ENCODE measurements at regions of chr3 and their contacts with region 1.

Region 1: DNA sequence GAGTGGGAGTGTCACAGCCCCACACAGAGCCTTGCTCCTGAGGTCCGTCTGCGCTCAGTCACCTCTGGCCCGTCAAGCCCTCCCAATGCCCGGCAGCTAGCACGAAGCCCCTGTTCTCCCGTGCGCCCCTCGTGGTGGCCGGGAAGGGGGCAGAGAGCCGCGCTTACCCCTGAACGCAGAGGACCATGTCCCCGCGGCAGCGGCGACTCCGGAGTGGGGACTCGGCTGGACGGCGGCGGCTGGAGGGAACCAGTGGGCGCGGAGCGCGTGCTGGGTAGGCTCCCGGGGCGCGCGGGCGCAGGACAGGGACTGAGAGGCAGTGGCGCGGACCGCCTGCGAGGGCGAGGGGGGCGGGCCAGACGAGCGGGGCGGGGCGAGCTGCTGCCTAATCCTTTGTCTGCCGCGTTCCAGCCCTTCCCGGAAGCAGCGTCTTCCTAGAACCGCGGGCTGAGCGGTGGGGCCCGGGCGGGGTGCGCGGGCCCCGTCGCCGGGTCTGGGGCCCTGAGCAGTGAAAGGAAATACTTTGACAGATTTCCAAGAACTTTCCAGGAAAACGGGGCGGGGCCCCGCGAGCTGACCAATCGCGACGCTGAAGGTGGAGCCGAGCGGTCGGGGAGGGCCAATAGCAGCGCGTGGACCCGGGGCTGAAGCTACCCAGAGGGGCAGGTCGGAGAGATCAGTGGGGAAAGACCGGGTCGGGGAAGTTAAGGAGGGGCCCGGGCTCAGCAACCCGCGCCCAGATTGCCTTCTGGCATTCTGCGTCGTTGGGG is at the start of gene CISH:
- DNase-seq: peak; percentile 90 to 93
- ATAC-seq: peak; percentile 75 to 86 (median 78)
- H3K4me3 ChIP-seq: peak within 1 kb of the TSS; percentile 78
- H3K4me3 Mint-ChIP-seq: peak within 1 kb of the TSS; percentile 97
- H3K27ac ChIP-seq: peak within 1 kb of the TSS; percentile 62
- H3K27ac Mint-ChIP-seq: peak within 1 kb of the TSS; percentile 90 to 93
- H3K4me1 ChIP-seq: peaks cover 88% of the 10 kb centered on the region
- H3K4me1 Mint-ChIP-seq: peaks cover 77 to 86% of the 10 kb centered on the region in 2 donors
- H3K27me3 ChIP-seq: no peaks in the 10 kb centered on the region
- H3K27me3 Mint-ChIP-seq: no peaks in the 10 kb centered on the region
- CTCF ChIP-seq: peak; percentile 52
- total RNA-seq, gene CISH: 2.4 to 23.6 (median 11.3) TPM

Region 2: GRCh38 chr3:50350527-50351322 is 260.9 kb before region 1 on chr3 and contains the starts of genes CYB561D2 and NPRL2:
- intact Hi-C with region 1: loop called (anchors 1 kb)
- DNase-seq: peak; percentile 97 to 99
- ATAC-seq: peak; percentile 87 to 95 (median 88)
- H3K4me3 ChIP-seq: peak within 1 kb of the TSS; percentile 86
- H3K4me3 Mint-ChIP-seq: peak within 1 kb of the TSS; percentile 96
- H3K27ac ChIP-seq: peak within 1 kb of the TSS; percentile 90
- H3K27ac Mint-ChIP-seq: peak within 1 kb of the TSS; percentile 96 to 98
- H3K4me1 ChIP-seq: peaks cover 64% of the 10 kb centered on the region
- H3K4me1 Mint-ChIP-seq: peaks cover 36 to 68% of the 10 kb centered on the region in 2 donors
- H3K27me3 ChIP-seq: no peaks in the 10 kb centered on the region
- H3K27me3 Mint-ChIP-seq: no peaks in the 10 kb centered on the region
- CTCF ChIP-seq: no peak
- total RNA-seq, gene CYB561D2: 39.6 to 54.0 (median 50.5) TPM
- total RNA-seq, gene NPRL2: 78.9 to 87.6 (median 80.9) TPM

Region 3: GRCh38 chr3:50572158-50572557 is 39.5 kb before region 1 on chr3:
- intact Hi-C with region 1: loop called (anchors 1 kb)
- DNase-seq: peak; percentile 77 to 91
- ATAC-seq: peak; percentile 29 to 53 (median 32)
- H3K4me3 ChIP-seq: no peak overlapping the region
- H3K4me3 Mint-ChIP-seq: peak overlapping the region; percentile 58
- H3K27ac ChIP-seq: peak overlapping the region; percentile 53
- H3K27ac Mint-ChIP-seq: peak overlapping the region; percentile 88 to 95
- H3K4me1 ChIP-seq: peaks cover 89% of the 10 kb centered on the region
- H3K4me1 Mint-ChIP-seq: peaks cover 52 to 81% of the 10 kb centered on the region in 2 donors
- H3K27me3 ChIP-seq: no peaks in the 10 kb centered on the region
- H3K27me3 Mint-ChIP-seq: no peaks in the 10 kb centered on the region
- CTCF ChIP-seq: peak; percentile 85

Region 4: GRCh38 chr3:50600841-50601591 is 10.6 kb before region 1 on chr3:
- intact Hi-C with region 1: loop called (anchors 1 kb)
- DNase-seq: peak; percentile 65 to 80
- ATAC-seq: peak; percentile 87 to 91 (median 89)
- H3K4me3 ChIP-seq: no peak overlapping the region
- H3K4me3 Mint-ChIP-seq: peak overlapping the region; percentile 73
- H3K27ac ChIP-seq: peak overlapping the region; percentile 81
- H3K27ac Mint-ChIP-seq: peak overlapping the region; percentile 93 to 95
- H3K4me1 ChIP-seq: peaks cover 71% of the 10 kb centered on the region
- H3K4me1 Mint-ChIP-seq: peaks cover 59 to 71% of the 10 kb centered on the region in 2 donors
- H3K27me3 ChIP-seq: no peaks in the 10 kb centered on the region
- H3K27me3 Mint-ChIP-seq: no peaks in the 10 kb centered on the region
- CTCF ChIP-seq: no peak

Region 5: DNA sequence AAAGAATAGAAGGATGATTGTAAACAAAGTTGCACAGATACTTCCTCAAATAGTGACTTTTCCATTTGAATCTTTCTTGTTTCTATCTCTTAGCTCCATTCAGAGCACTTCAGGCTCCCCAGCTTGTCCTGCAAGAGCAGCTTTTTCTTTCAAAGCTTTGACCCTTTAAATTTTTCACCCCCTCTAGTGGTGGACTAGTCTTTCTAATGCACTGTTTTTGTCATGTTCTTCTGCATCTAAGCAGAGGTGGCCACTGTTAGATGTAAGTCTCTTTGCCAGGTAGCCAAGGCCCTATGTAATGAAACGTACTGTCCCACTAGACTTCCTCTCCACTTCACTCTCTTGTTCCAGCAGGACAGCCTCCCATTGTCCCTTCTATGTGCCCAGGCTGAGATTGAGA is 699.4 kb after region 1 on chr3:
- intact Hi-C with region 1: loop called (anchors 1 kb)
- DNase-seq: peak in 1 of 2 donors; percentile 58
- ATAC-seq: no peak
- H3K4me3 ChIP-seq: no peak overlapping the region
- H3K4me3 Mint-ChIP-seq: no peak overlapping the region
- H3K27ac ChIP-seq: no peak overlapping the region
- H3K27ac Mint-ChIP-seq: no peak overlapping the region
- H3K4me1 ChIP-seq: no peaks in the 10 kb centered on the region
- H3K4me1 Mint-ChIP-seq: no peaks in the 10 kb centered on the region
- H3K27me3 ChIP-seq: no peaks in the 10 kb centered on the region
- H3K27me3 Mint-ChIP-seq: peaks cover 6 to 7% of the 10 kb centered on the region in 2 donors
- CTCF ChIP-seq: peak; percentile 25

Region 6: DNA sequence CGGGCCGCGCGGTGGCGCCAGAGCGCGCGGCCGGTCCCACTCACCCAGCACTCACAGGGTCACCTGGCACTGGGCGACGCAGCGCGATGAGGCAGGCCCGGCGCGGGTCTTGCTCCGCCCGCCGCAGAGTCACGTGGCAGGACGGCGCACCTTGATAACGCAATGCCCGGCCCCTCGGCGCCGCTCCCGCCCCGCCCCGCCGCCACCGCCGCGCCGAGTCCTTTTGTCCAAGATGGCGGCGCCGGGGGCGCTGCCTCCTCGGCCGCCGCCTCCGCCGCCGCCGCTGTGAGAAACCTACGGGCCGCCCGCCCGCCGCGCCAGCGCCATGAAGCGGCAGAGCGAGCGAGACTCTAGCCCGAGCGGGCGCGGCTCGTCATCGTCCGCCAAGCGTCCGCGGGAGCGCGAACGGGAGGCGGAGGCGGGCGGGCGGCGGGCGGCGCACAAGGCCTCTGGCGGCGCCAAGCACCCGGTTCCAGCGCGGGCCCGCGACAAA is 779.5 kb after region 1 on chr3 and contains the start of gene RBM15B:
- intact Hi-C with region 1: loop called (anchors 2 kb)
- DNase-seq: peak; percentile 97 to 98
- ATAC-seq: peak; percentile 93 to 99 (median 94)
- H3K4me3 ChIP-seq: peak within 1 kb of the TSS; percentile 47
- H3K4me3 Mint-ChIP-seq: peak within 1 kb of the TSS; percentile 81
- H3K27ac ChIP-seq: peak within 1 kb of the TSS; percentile 77
- H3K27ac Mint-ChIP-seq: peak within 1 kb of the TSS; percentile 81 to 82
- H3K4me1 ChIP-seq: peaks cover 64% of the 10 kb centered on the region
- H3K4me1 Mint-ChIP-seq: peaks cover 40 to 51% of the 10 kb centered on the region in 2 donors
- H3K27me3 ChIP-seq: no peaks in the 10 kb centered on the region
- H3K27me3 Mint-ChIP-seq: no peaks in the 10 kb centered on the region
- CTCF ChIP-seq: peak; percentile 82
- total RNA-seq, gene RBM15B: 23.7 to 29.0 (median 28.6) TPM

Region 7: GRCh38 chr3:51501833-51502561 is 890.3 kb after region 1 on chr3:
- intact Hi-C with region 1: loop called (anchors 2 kb)
- DNase-seq: peak; percentile 77 to 92
- ATAC-seq: peak in 2 of 3 donors; percentile 20 to 22
- H3K4me3 ChIP-seq: no peak overlapping the region
- H3K4me3 Mint-ChIP-seq: no peak overlapping the region
- H3K27ac ChIP-seq: no peak overlapping the region
- H3K27ac Mint-ChIP-seq: peak overlapping the region; percentile 95 to 97
- H3K4me1 ChIP-seq: peaks cover 10% of the 10 kb centered on the region
- H3K4me1 Mint-ChIP-seq: peaks cover 15 to 19% of the 10 kb centered on the region in 2 donors
- H3K27me3 ChIP-seq: no peaks in the 10 kb centered on the region
- H3K27me3 Mint-ChIP-seq: no peaks in the 10 kb centered on the region
- CTCF ChIP-seq: peak; percentile 79